Activated B cell treated with CpG ODN at 0.5 μM for 24 hours (primary cell): ENCODE measurements at regions of chr1 and their contacts with region 1.

Region 1: GRCh38 chr1:222792744-222793143 is 22.1 kb upstream of the DISP1 start:
- DNase-seq: no peak
- ATAC-seq: no peak
- H3K4me3 Mint-ChIP-seq: no peak overlapping the region
- H3K27ac Mint-ChIP-seq: peak overlapping the region; percentile 13
- H3K4me1 Mint-ChIP-seq: peaks cover 34% of the 10 kb centered on the region
- H3K27me3 Mint-ChIP-seq: no peaks in the 10 kb centered on the region
- CTCF ChIP-seq: peak; percentile 38

Region 2: GRCh38 chr1:222987674-222988076 is 194.9 kb after region 1 on chr1:
- CTCF ChIA-PET with region 1: no interaction called
- POLR2A ChIA-PET with region 1: no interaction called
- intact Hi-C with region 1: loop called (anchors 5 kb)
- DNase-seq: no peak
- ATAC-seq: no peak
- H3K4me3 Mint-ChIP-seq: no peak overlapping the region
- H3K27ac Mint-ChIP-seq: no peak overlapping the region
- H3K4me1 Mint-ChIP-seq: peaks cover 9% of the 10 kb centered on the region
- H3K27me3 Mint-ChIP-seq: no peaks in the 10 kb centered on the region
- CTCF ChIP-seq: no peak

Region 3: DNA sequence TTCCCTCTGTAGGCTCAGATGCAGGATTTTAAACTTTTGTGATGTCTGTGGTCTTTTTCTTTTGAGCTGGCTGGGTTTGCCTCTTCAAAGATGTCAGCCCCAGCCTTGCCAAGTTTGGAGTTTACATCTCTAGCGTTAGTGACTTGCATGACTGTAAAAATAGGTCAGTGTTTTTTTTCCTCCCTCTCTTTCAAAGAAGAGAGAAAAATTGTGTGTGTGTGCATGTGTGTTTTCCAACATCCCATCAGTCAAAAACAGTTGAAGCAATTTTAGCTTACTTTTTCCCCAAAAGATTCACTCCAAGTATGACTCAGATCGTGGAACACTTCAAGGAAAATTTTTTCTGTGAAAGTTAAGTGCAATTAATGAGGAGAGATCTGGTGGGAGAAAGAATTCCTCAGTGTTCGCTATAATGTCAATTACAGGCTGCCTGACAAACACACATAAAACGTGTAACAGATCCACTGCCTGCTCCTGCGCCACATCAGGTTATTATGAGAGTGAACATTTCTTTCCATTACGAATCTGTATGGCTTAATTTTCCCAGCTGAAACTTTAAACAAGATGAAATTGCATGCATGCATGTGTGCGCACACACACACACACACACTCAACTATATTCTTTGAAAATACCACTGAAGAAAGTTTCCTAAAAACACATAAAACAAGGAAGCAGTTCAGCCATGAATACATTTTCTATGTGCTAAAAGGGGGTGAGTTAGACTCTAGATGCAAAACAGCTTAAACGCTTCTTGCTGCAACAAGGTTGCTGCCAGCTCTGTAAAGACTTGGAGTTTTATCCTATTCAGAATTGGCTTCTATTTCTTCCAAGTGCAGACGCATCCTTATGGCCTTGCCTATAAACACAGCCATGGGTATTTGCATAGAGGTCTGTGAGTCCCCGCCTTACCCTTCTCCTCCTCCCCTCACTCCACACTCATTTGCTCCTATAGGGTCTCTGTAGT is 294.8 kb after region 1 on chr1:
- CTCF ChIA-PET with region 1: interaction called, 28 read pairs
- POLR2A ChIA-PET with region 1: no interaction called
- intact Hi-C with region 1: loop called (anchors 1 kb)
- DNase-seq: no peak
- ATAC-seq: no peak
- H3K4me3 Mint-ChIP-seq: no peak overlapping the region
- H3K27ac Mint-ChIP-seq: no peak overlapping the region
- H3K4me1 Mint-ChIP-seq: no peaks in the 10 kb centered on the region
- H3K27me3 Mint-ChIP-seq: peaks cover 1% of the 10 kb centered on the region
- CTCF ChIP-seq: no peak

Region 4: DNA sequence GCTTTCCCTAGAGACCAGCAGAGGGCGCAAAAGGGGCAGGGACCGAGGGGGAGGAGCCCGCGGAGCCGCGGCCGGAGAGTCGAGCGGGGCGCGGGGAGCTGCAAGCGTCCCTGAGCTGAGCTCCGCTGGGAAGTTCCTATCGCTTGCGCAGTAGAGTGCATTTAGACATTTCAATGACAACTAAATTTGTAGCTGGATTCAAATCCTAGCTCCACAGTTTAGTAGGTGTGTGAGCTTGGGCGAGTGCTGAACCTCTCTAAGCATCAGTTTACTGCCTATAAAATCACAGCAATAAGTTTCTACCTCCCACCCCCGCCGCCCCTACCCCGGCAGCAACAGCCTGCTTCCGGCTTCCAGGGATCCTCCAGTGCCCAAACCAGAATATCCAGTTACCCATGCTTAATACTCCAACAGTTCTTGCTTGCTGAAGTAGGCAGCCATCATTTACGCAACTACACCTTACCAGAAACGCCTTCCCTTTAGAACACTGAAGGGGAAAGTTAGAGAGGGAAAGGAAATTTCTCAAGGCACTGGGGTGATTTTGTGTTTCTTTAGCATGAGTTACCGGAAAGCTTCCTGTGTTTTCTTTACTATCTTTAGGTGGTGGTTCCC is 341.2 kb after region 1 on chr1:
- CTCF ChIA-PET with region 1: interaction called, 5 read pairs
- POLR2A ChIA-PET with region 1: no interaction called
- intact Hi-C with region 1: loop called (anchors 1 kb)
- DNase-seq: peak; percentile 62
- ATAC-seq: peak; percentile 92
- H3K4me3 Mint-ChIP-seq: peak overlapping the region; percentile 55
- H3K27ac Mint-ChIP-seq: no peak overlapping the region
- H3K4me1 Mint-ChIP-seq: peaks cover 12% of the 10 kb centered on the region
- H3K27me3 Mint-ChIP-seq: peaks cover 62% of the 10 kb centered on the region
- CTCF ChIP-seq: no peak

Region 5: DNA sequence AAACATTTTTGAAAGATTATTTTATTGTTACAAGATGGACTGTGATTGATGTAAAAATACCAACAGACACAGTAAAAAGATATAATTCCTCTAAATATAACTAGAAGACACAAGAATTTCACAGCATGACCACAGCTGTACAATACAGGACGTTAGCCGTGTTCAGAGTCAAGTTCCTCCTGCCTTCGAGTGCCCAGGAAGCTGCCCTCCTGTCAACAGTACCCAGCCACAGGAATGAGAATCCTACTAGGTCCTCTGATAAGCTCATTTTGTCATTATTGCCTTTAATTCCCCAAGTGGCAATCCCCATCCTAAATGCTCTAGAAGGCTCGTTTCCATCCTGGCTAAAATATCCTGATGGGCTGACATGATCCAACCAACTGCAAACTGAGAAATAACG is 903.2 kb after region 1 on chr1:
- CTCF ChIA-PET with region 1: interaction called, 3 read pairs
- POLR2A ChIA-PET with region 1: interaction called, 3 read pairs
- intact Hi-C with region 1: loop called (anchors 1 kb)
- DNase-seq: no peak
- ATAC-seq: no peak
- H3K4me3 Mint-ChIP-seq: no peak overlapping the region
- H3K27ac Mint-ChIP-seq: no peak overlapping the region
- H3K4me1 Mint-ChIP-seq: peaks cover 6% of the 10 kb centered on the region
- H3K27me3 Mint-ChIP-seq: no peaks in the 10 kb centered on the region
- CTCF ChIP-seq: no peak